ENCODE measurements at regions of chr20 and their contacts with region 1.

Region 1: GRCh38 chr20:25623736-25624499 is at the start of gene NANP:
- DNase-seq: peak; percentile 98 to 99
- ATAC-seq: peak; percentile 91 to 94
- H3K4me3 ChIP-seq: peak within 1 kb of the TSS; percentile 92
- H3K27ac ChIP-seq: peak within 1 kb of the TSS; percentile 97
- H3K4me1 ChIP-seq: peaks cover 21% of the 10 kb centered on the region
- CTCF ChIP-seq: no peak; the same call in 2 of the 3 replicates
- EP300 ChIP-seq: no peak; a peak in 1 of 5 replicates
- POLR2A ChIP-seq: peak; percentile 92
- RAD21 ChIP-seq: no peak
- polyA plus RNA-seq, gene NANP: 11.4 and 12.2 TPM in 2 replicates

Region 2: GRCh38 chr20:24970754-24971153 is 653.2 kb before region 1 on chr20:
- CTCF ChIA-PET with region 1: no interaction called
- POLR2A ChIA-PET with region 1: no interaction called
- DNase-seq: no peak
- ATAC-seq: no peak
- H3K4me3 ChIP-seq: no peak overlapping the region
- H3K27ac ChIP-seq: no peak overlapping the region
- H3K4me1 ChIP-seq: no peaks in the 10 kb centered on the region
- CTCF ChIP-seq: no peak
- EP300 ChIP-seq: no peak
- POLR2A ChIP-seq: no peak
- RAD21 ChIP-seq: no peak

Region 3: DNA sequence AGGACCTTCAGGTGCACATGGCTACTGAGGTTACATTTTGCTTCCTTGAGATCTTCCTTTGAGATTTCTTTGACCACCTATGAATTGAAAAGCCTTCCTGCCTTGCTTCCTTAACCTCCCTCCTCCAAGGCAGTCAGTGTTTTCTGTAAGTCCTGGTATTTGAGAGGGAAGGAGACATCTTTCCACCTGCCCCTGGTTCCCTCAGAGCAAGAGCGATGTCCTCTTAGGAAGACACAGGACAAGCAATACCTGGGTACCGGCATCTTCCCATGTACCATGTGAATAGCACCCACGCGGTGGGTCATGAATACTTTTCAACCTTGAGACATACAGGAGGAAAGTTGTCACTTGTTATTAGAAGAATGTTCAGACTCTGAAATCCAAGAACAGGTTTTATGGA is 179.4 kb before region 1 on chr20:
- CTCF ChIA-PET with region 1: no interaction called
- POLR2A ChIA-PET with region 1: no interaction called
- DNase-seq: no peak
- ATAC-seq: no peak
- H3K4me3 ChIP-seq: no peak overlapping the region
- H3K27ac ChIP-seq: no peak overlapping the region
- H3K4me1 ChIP-seq: no peaks in the 10 kb centered on the region
- CTCF ChIP-seq: no peak
- EP300 ChIP-seq: no peak
- POLR2A ChIP-seq: no peak
- RAD21 ChIP-seq: no peak

Region 4: GRCh38 chr20:25584905-25585704 is 38.8 kb before region 1 on chr20 and contains the start of gene NINL:
- CTCF ChIA-PET with region 1: interaction called, 3 read pairs
- POLR2A ChIA-PET with region 1: interaction called, 11 read pairs
- DNase-seq: peak; percentile 83 to 85
- ATAC-seq: peak; percentile 91 to 93
- H3K4me3 ChIP-seq: peak within 1 kb of the TSS; percentile 71
- H3K27ac ChIP-seq: peak within 1 kb of the TSS; percentile 88 to 93
- H3K4me1 ChIP-seq: peaks cover 33% of the 10 kb centered on the region
- CTCF ChIP-seq: no peak
- EP300 ChIP-seq: no peak
- POLR2A ChIP-seq: peak; percentile 89
- RAD21 ChIP-seq: peak in 1 of 2 experiments; percentile 44; a peak in 3 of 5 replicates
- polyA plus RNA-seq, gene NINL: 15.3 and 22.4 TPM in 2 replicates